ENCODE measurements at regions of chr12 and their contacts with region 1.

Region 1: DNA sequence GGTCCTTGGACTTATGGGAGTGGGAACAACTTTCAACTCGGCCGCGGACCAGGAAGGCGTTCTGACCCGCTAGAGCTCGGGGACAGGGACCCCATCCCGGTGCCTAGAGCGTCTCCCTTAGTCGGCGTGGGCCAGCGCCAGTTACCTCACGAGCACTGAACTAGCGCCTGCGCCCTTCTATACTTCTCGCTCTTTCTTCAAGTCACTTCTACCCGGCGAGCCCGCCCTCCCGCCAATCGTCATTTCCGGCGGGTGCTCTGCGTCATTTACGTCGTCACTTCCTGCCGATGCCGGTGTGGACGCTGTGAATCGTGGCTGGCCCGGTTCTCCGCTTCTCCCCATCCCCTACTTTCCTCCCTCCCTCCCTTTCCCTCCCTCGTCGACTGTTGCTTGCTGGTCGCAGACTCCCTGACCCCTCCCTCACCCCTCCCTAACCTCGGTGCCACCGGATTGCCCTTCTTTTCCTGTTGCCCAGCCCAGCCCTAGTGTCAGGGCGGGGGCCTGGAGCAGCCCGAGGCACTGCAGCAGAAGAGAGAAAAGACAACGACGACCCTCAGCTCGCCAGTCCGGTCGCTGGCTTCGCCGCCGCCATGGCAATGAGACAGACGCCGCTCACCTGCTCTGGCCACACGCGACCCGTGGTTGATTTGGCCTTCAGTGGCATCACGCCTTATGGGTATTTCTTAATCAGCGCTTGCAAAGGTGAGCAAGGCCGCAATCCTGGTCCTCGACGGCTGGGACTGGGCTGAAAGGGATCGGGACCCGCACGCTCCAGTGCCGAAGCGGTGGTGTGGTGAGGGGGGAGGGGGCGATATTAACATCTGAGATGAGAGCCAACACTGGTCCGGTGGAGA is at the start of gene STRAP:
- DNase-seq: peak; percentile 96
- H3K4me3 Mint-ChIP-seq: peak within 1 kb of the TSS; percentile 97
- H3K27ac Mint-ChIP-seq: peak within 1 kb of the TSS; percentile 96
- H3K4me1 Mint-ChIP-seq: peaks cover 39% of the 10 kb centered on the region
- H3K27me3 Mint-ChIP-seq: no peaks in the 10 kb centered on the region
- total RNA-seq, gene STRAP: 131 to 133 TPM

Region 2: GRCh38 chr12:14769969-14770495 is 1112.3 kb before region 1 on chr12:
- CTCF ChIA-PET with region 1: no interaction called
- intact Hi-C with region 1: loop called (anchors 5 kb)
- DNase-seq: peak; percentile 89
- H3K4me3 Mint-ChIP-seq: peak overlapping the region; percentile 97
- H3K27ac Mint-ChIP-seq: peak overlapping the region; percentile 98
- H3K4me1 Mint-ChIP-seq: peaks cover 38% of the 10 kb centered on the region
- H3K27me3 Mint-ChIP-seq: no peaks in the 10 kb centered on the region

Region 3: DNA sequence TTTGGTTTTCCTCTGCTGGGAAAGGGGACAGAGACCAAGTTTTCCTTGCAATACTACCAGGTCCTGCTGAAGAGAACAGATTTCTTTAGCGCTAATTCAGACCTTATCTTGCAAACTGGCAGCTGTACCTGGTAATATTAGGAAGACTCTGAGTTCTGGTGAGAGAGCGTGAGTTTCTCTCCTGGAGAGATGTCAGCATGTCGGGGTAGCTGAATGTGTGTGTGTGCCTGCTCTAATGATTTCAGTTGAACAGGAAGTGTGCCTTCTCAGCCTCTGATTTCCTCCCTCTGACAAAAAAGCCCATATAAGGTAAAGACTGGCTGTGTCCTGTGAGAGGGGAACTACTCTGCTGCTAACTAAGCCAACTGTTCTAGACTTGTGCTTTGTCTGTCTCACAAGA is 933.7 kb before region 1 on chr12:
- CTCF ChIA-PET with region 1: no interaction called
- intact Hi-C with region 1: loop called (anchors 10 kb)
- DNase-seq: peak; percentile 73
- H3K4me3 Mint-ChIP-seq: peak overlapping the region; percentile 71
- H3K27ac Mint-ChIP-seq: peak overlapping the region; percentile 95
- H3K4me1 Mint-ChIP-seq: peaks cover 82% of the 10 kb centered on the region
- H3K27me3 Mint-ChIP-seq: no peaks in the 10 kb centered on the region

Region 4: DNA sequence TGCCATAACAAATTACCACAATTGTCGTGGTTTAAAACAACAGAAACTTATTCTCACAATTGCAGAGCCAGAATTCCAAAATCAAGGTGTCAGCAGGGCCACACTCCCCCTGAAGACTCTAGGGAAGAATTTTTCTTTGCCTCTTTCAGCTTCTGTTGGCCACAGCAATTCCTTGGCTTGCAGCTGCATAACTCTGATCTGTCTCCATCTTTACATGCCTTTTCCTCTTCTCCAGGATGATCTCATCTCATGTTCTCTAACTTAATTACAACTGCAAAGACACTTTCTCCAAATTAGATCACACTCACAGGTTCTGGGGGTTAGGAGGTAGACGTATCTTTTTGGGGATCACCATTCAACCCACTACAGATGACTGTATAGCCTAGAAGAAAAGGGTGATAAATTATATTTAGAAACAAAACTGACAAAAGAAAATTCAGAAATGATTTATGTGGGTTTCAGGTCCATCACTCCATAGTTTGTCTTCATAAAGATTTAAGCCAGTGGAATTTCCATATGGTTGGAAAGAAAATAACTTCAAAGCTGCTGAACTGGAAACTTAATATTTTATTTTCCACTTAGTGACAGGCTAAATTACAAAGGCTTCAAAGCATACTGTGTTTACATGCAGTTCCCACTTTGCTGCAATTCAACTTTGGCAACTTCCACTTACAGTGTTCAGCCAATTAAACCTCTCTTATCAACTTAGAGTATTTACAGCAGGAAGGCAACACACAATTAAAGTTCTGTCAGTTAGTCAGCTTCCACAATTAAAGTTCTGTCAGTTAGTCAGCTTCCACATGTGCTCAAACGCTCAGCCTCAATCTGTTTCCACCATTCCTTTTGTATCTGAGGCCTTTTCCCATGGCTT is 306.4 kb before region 1 on chr12:
- CTCF ChIA-PET with region 1: no interaction called
- intact Hi-C with region 1: loop called (anchors 1 kb)
- DNase-seq: no peak
- H3K4me3 Mint-ChIP-seq: no peak overlapping the region
- H3K27ac Mint-ChIP-seq: peak overlapping the region; percentile 48
- H3K4me1 Mint-ChIP-seq: peaks cover 53% of the 10 kb centered on the region
- H3K27me3 Mint-ChIP-seq: no peaks in the 10 kb centered on the region

Region 5: DNA sequence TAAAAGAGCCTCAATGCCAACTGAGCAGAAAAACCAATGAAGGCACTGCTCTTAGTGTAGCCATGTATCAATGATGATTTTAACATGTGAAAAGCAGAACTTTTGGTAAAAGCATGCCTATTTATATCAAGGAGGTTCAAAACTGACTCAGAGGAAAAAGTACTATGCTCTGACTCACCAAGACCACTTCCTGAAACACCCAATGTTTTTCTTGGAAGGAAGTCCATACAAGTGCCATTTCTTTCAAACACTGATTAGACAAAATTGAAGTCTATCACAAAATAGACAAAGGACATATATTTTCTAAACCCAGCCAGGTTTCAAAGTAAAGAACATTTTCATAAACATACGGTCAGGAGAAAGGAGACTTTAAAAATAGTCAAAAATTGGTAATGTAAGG is 181.8 kb before region 1 on chr12:
- CTCF ChIA-PET with region 1: no interaction called
- intact Hi-C with region 1: loop called (anchors 5 kb)
- DNase-seq: peak; percentile 45
- H3K4me3 Mint-ChIP-seq: no peak overlapping the region
- H3K27ac Mint-ChIP-seq: peak overlapping the region; percentile 35
- H3K4me1 Mint-ChIP-seq: peaks cover 27% of the 10 kb centered on the region
- H3K27me3 Mint-ChIP-seq: peaks cover 3% of the 10 kb centered on the region

Region 6: DNA sequence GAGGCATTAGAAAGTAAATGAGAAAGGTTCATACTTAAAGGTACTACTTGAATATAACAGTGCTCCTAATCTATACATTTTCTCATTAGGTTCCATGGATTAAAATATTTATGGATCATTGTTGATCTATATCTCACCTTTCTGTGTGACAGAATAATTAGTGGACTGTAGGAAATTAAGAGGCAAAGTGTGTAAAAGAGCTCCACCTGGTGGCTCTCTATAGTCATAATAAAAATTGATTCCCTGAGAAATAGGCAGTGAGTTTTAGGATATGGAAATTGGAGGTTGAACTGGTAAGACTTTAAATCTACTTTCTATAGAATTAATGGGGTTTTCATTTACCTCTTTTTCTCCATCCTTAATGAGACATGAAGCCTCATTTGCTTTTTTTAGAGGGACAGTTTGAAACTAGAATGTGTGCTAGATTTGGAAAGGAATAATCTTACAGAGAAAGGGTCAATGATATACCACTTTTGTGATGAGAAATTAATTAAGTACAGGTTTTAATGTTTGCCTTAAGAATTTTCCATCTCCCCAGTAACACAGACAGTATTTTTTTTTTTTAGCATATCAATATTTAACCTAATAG is 17.0 kb after region 1 on chr12:
- CTCF ChIA-PET with region 1: interaction called, 28 read pairs
- intact Hi-C with region 1: loop called (anchors 1 kb)
- DNase-seq: no peak
- H3K4me3 Mint-ChIP-seq: no peak overlapping the region
- H3K27ac Mint-ChIP-seq: no peak overlapping the region
- H3K4me1 Mint-ChIP-seq: peaks cover 4% of the 10 kb centered on the region
- H3K27me3 Mint-ChIP-seq: no peaks in the 10 kb centered on the region

Region 7: GRCh38 chr12:16027002-16027401 is 144.7 kb after region 1 on chr12:
- CTCF ChIA-PET with region 1: no interaction called
- intact Hi-C with region 1: no loop called
- DNase-seq: no peak
- H3K4me3 Mint-ChIP-seq: no peak overlapping the region
- H3K27ac Mint-ChIP-seq: no peak overlapping the region
- H3K4me1 Mint-ChIP-seq: no peaks in the 10 kb centered on the region
- H3K27me3 Mint-ChIP-seq: no peaks in the 10 kb centered on the region

Measured in activated naive CD4-positive, alpha-beta T cell treated with anti-CD3 and anti-CD28 coated beads for 36 hours (primary cell).